Activated B cell treated with CpG ODN at 0.5 μM for 24 hours (primary cell): ENCODE measurements at regions of chr1 and their contacts with region 1.

Region 1: DNA sequence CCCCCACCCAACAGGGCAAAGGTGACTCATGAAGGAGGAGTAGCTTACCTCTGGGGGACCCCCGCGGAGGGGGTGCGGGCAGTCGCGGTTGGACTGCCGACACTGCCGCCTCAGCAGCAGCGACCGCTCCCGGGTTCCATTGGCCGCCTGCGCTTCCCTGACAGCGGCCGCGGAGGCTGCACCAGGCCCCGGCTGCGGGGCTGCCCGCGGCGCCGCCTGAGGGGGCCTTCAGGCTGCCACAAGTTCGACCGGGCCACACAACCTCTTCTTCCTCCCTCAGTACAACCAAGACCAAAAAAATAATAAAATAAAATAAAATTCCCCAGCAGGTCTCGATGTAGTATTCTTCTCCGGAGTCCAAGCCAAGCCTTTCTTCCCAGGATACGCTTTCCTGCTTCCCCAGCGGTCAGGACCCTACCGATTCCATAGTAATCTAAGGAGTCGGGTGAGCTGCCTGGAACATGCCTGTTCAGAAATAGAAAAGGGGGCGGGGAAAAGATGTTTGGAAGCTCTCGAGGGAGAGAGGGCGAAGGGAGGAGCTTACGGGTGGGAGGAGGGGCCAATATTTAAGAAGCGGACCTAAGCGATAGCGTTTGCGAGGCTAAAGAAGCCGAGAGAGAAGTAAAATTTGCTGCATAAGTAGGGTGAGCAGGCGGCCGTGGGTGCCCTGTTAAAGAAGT is at the start of gene PI4KB:
- DNase-seq: peak; percentile 76
- ATAC-seq: peak; percentile 92
- H3K4me3 Mint-ChIP-seq: peak within 1 kb of the TSS; percentile 97
- H3K27ac Mint-ChIP-seq: peak within 1 kb of the TSS; percentile 99
- H3K4me1 Mint-ChIP-seq: peaks cover 42% of the 10 kb centered on the region
- H3K27me3 Mint-ChIP-seq: no peaks in the 10 kb centered on the region
- CTCF ChIP-seq: no peak
- total RNA-seq, gene PI4KB: 112 and 113 TPM in 2 replicates

Region 2: GRCh38 chr1:151189638-151190445 is 137.5 kb before region 1 on chr1 and contains the start of gene VPS72:
- CTCF ChIA-PET with region 1: no interaction called
- POLR2A ChIA-PET with region 1: interaction called, 10 read pairs
- intact Hi-C with region 1: no loop called
- DNase-seq: peak; percentile 73
- ATAC-seq: peak; percentile 93
- H3K4me3 Mint-ChIP-seq: peak within 1 kb of the TSS; percentile 100
- H3K27ac Mint-ChIP-seq: peak within 1 kb of the TSS; percentile 99
- H3K4me1 Mint-ChIP-seq: peaks cover 34% of the 10 kb centered on the region
- H3K27me3 Mint-ChIP-seq: no peaks in the 10 kb centered on the region
- CTCF ChIP-seq: no peak
- total RNA-seq, gene VPS72: 58.8 and 72.1 TPM in 2 replicates

Region 3: DNA sequence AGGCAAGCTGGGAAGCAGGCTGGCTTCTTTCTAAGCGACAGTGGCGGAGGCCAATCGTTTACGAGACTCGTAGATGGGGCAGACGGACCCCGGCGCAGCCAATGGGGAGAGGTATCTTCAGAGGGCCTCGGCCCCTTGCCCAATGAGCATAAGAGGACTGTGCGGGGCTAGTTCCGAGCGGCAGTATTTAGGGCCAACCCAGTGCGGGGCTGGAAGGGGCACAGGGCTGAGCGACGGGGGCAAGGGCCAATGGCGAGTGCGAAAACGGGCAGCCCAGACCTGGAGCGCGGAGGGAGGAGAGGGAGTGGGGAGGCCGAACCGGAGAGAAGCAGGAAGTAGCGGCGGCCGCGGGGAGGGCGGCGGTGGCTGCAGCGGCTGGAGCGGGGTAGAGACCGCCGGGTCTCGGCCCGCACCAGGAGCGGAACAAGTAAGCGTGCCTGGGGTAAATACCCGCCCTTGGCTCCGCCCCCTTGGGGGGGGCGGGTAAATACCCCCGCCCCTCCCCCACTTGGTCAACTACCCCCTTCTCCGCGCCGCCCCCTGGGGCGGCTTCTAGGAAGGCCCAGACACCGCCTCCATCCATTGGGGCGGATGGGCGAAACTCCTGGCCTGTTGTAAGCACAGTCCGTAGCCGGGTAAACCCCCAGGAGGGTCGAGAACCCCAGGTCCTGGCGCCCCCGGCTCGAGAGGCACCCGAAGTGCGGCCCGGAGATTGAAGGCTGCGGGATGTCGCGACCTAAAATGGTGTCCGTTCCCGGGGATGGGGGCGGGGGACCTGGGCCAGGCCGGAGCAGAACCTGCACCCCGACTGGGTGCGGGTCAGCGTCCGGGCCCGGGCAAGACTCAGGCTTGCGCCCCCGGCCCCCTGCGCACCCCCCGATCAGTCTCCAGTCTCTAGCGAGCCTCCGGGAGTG is 45.1 kb before region 1 on chr1 and contains the start of gene ZNF687:
- CTCF ChIA-PET with region 1: interaction called, 6 read pairs
- POLR2A ChIA-PET with region 1: interaction called, 26 read pairs
- intact Hi-C with region 1: loop called (anchors 1 kb)
- DNase-seq: peak; percentile 96
- ATAC-seq: peak; percentile 88
- H3K4me3 Mint-ChIP-seq: peak within 1 kb of the TSS; percentile 99
- H3K27ac Mint-ChIP-seq: peak within 1 kb of the TSS; percentile 99
- H3K4me1 Mint-ChIP-seq: peaks cover 54% of the 10 kb centered on the region
- H3K27me3 Mint-ChIP-seq: no peaks in the 10 kb centered on the region
- CTCF ChIP-seq: no peak
- total RNA-seq, gene ZNF687: 38.8 and 40.3 TPM in 2 replicates

Region 4: DNA sequence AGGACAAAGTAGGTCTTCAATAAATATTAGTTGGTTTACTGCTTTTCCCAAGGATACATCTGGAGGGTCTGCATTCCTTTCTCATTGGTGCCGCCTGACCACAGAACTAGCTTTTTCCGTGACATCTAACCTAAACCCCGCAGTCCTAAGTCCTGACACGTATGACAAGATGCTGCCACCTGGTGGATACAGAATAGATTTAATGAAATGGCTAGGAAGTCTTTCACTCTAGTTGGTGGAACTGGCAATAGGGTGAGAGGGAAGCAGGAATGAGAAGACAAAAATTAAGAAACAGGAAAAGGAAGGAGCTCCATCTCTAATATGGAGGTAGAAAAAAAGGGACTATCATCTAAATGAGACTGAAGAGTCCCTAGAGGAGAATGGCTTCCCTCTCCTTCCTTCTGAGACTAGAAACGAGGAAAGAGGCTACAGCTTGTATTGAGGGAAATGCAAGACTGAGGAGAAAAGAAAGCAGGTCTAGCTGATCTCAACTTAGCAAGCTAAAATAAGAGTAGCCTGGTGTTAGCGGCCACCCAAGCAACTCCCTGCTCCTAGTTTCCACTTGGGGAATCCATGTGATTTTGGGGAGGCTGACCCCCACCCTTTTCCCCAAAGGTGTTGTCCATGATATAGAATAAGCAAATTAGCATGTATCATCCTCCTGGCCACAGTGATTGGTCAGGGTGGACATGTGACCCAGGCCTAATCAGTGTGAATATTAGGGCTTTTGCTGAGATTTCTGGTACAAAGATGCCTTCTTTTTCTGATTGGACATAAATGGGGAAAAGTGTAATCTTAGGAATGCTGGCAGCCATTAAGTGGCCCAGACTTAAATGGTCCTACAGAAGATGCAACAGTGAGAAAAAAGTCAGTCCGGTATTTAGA is 13.7 kb after region 1 on chr1:
- CTCF ChIA-PET with region 1: interaction called, 12 read pairs
- POLR2A ChIA-PET with region 1: interaction called, 94 read pairs
- intact Hi-C with region 1: loop called (anchors 1 kb)
- DNase-seq: no peak
- ATAC-seq: peak; percentile 86
- H3K4me3 Mint-ChIP-seq: no peak overlapping the region
- H3K27ac Mint-ChIP-seq: peak overlapping the region; percentile 100
- H3K4me1 Mint-ChIP-seq: peaks cover 47% of the 10 kb centered on the region
- H3K27me3 Mint-ChIP-seq: no peaks in the 10 kb centered on the region
- CTCF ChIP-seq: no peak

Region 5: GRCh38 chr1:151399890-151400495 is 72.6 kb after region 1 on chr1:
- CTCF ChIA-PET with region 1: interaction called, 7 read pairs
- POLR2A ChIA-PET with region 1: interaction called, 59 read pairs
- intact Hi-C with region 1: loop called (anchors 1 kb)
- DNase-seq: no peak
- ATAC-seq: peak; percentile 3
- H3K4me3 Mint-ChIP-seq: peak overlapping the region; percentile 89
- H3K27ac Mint-ChIP-seq: peak overlapping the region; percentile 98
- H3K4me1 Mint-ChIP-seq: peaks cover 31% of the 10 kb centered on the region
- H3K27me3 Mint-ChIP-seq: no peaks in the 10 kb centered on the region
- CTCF ChIP-seq: no peak

Region 6: GRCh38 chr1:152533327-152533938 is 1206.1 kb after region 1 on chr1:
- CTCF ChIA-PET with region 1: no interaction called
- POLR2A ChIA-PET with region 1: no interaction called
- intact Hi-C with region 1: no loop called
- DNase-seq: no peak
- ATAC-seq: no peak
- H3K4me3 Mint-ChIP-seq: no peak overlapping the region
- H3K27ac Mint-ChIP-seq: no peak overlapping the region
- H3K4me1 Mint-ChIP-seq: no peaks in the 10 kb centered on the region
- H3K27me3 Mint-ChIP-seq: peaks cover 16% of the 10 kb centered on the region
- CTCF ChIP-seq: no peak